ENCODE measurements at regions of chr2 and their contacts with region 1.

Region 1: DNA sequence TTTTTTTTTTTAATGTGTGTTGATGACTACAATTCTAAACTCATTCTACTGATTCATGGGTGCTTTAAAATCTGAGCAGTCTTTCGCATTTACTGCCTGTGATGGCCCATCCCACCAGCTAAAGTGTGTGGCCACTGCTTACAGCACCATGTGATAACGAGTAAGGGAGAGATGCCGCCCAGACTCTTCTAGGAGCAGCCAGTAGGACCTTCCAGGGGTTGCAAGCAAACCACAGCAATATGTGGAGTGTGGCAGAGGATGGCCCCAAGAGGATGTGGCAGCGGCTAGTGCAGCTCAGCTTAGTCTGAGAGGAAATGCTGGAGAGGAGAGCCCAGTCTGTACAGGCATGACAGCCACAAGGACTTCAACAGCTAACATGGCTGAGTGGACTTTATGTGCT is 14.9 kb downstream of the IL1B start:
- DNase-seq: no peak
- ATAC-seq: no peak
- H3K4me3 Mint-ChIP-seq: no peak overlapping the region
- H3K27ac Mint-ChIP-seq: no peak overlapping the region
- H3K4me1 Mint-ChIP-seq: no peaks in the 10 kb centered on the region
- H3K27me3 Mint-ChIP-seq: no peaks in the 10 kb centered on the region
- CTCF ChIP-seq: no peak

Region 2: DNA sequence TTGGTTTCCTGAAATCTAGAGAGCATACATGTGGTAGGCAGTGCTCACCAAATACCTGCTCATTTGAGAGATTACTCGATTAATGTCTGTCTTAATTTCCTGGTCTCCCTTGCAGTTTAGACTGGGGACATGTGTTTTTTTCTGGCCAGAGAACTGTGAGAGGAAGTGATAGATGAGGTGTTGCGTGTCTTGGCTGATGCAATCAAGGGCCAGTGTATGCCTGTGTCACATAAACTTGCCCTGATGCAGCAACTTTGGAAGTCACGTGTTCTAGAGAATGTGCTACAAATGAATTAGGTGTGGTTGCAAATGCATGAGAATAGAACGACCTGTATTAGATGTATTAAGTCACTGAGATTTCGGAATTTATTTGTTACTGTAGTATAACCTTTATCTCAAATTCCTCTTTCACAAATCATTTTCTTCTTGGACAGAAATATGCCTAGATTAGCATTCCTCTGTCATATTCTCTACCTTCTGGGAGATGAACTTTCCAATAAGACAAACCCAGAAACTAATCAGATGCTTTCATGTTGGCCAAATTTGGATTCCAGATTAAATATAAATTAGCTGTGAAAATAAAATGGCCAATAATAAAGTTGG is 27.4 kb before region 1 on chr2:
- CTCF ChIA-PET with region 1: no interaction called
- POLR2A ChIA-PET with region 1: interaction called, 11 read pairs
- intact Hi-C with region 1: no loop called
- DNase-seq: no peak
- ATAC-seq: peak; percentile 85
- H3K4me3 Mint-ChIP-seq: no peak overlapping the region
- H3K27ac Mint-ChIP-seq: peak overlapping the region; percentile 37
- H3K4me1 Mint-ChIP-seq: peaks cover 25% of the 10 kb centered on the region
- H3K27me3 Mint-ChIP-seq: no peaks in the 10 kb centered on the region
- CTCF ChIP-seq: no peak

Measured in activated B cell treated with CpG ODN at 0.5 μM for 24 hours (primary cell).